ENCODE measurements at regions of chr4 and their contacts with region 1.

Region 1: DNA sequence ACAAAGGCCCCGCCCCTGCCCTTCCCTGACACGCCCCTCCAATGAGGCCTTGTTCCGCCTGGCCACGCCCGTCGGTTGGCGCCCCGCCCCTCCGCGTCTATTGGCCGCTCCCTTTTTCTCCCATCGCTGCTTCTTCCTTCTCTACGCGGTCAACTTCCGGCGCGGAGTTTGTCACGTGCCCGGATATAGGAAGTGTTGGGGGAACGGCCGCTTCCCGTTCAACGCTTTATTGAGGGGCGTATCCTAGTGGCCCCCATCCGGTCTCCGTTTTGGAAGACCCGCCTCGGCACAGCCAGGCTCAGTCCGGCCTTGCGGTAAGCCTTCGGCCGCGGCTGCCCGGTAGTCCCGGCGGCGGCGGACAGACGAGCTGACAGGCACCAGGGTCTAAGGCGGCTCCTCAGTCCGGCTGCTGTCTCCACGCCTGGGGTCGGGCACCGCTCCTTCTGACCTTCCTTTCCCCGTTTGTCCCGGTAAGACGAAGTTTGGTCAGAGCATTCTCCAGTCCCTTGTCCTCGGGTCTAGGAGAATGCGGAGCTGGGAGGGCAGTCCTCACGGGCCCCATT is at the start of gene EXOC1:
- DNase-seq: peak; percentile 92
- H3K4me3 ChIP-seq: peak within 1 kb of the TSS; percentile 97 to 99
- H3K27ac ChIP-seq: peak within 1 kb of the TSS; percentile 82 to 86
- H3K4me1 ChIP-seq: peaks cover 0 to 7% of the 10 kb centered on the region in 2 experiments; a peak in 2 of 4 replicates
- H3K27me3 ChIP-seq: no peaks in the 10 kb centered on the region
- CTCF ChIP-seq: no peak
- EP300 ChIP-seq: no peak
- RAD21 ChIP-seq: no peak
- polyA plus RNA-seq, gene EXOC1: 13.5 and 20.7 TPM in 2 replicates

Region 2: GRCh38 chr4:55866973-55867574 is 13.5 kb after region 1 on chr4:
- CTCF ChIA-PET with region 1: interaction called, 21 read pairs
- POLR2A ChIA-PET with region 1: no interaction called
- DNase-seq: peak; percentile 36
- H3K4me3 ChIP-seq: peak overlapping the region in 1 of 2 experiments; percentile 41; a peak in 1 of 4 replicates
- H3K27ac ChIP-seq: peak overlapping the region in 1 of 2 experiments; percentile 79; a peak in 3 of 4 replicates
- H3K4me1 ChIP-seq: peaks cover 2 to 10% of the 10 kb centered on the region in 2 experiments; a peak in 3 of 4 replicates
- H3K27me3 ChIP-seq: no peaks in the 10 kb centered on the region
- CTCF ChIP-seq: peak; percentile 92
- EP300 ChIP-seq: no peak
- RAD21 ChIP-seq: peak; percentile 83